ENCODE measurements at regions of chr11 and their contacts with region 1.

Region 1: DNA sequence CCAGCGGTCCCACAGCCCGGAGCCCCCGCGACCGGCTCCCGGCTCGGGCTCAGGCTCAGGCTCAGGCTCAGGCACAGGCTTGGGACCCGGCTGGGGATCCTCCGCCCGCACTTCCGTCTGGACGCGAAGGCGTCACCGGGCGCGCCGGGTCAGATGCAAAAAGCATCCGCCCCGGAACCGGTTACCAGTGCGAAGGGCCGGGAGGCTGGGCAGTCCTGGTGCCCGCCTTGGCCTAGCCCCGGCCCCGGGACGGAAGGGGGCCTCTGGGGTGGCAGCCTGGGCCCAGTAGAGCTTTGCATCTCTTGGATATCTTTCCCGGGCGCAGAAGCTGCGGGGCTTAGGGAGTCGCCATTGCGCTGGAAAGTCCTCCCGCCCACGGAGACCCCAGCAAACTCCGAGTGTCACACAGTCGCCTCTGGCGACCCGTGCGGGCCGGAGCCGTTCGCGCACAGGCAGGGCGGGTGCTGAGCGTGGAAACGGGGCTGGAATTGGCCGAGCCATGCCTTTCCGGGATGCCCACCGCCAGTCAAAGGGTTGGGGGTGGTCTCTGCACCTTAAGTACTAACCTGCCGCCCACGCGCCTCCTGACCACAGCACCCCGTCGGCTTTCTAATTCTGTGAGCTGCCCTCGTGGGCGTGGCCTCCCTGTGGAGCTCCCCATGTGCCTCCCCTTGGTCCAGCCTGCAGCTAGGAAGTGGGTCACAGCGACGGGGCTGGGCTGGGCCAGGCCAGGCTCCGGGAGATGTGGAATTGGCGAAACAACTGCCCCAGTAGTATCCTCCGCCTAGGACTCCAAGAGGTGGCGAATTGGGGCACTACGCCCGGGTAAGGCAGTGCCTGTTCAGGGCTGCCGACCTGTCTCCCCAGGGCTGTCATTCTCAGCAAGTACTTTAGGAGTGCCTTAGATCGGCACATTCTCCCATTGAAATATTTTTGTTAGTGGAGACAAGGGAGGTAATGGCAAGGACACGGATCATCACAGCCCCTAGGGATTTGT is at the start of gene TMEM9B:
- DNase-seq: peak; percentile 84 to 87 (median 84)
- H3K4me3 ChIP-seq: peak within 1 kb of the TSS; percentile 85 to 89 (median 85)
- H3K4me3 Mint-ChIP-seq: peak within 1 kb of the TSS; percentile 95 to 98
- H3K27ac ChIP-seq: peak within 1 kb of the TSS; percentile 98 to 99
- H3K27ac Mint-ChIP-seq: peak within 1 kb of the TSS; percentile 95 to 100 (median 97)
- H3K4me1 ChIP-seq: peaks cover 21 to 26% of the 10 kb centered on the region in 2 donors
- H3K4me1 Mint-ChIP-seq: peaks cover 35% of the 10 kb centered on the region
- H3K27me3 ChIP-seq: no peaks in the 10 kb centered on the region
- H3K27me3 Mint-ChIP-seq: peaks cover 0 to 5% (median 0%) of the 10 kb centered on the region in 3 donors
- CTCF ChIP-seq: no peak
- polyA plus RNA-seq, gene TMEM9B: 25.5 to 149 (median 141) TPM

Region 2: GRCh38 chr11:8671193-8671612 is 293.4 kb before region 1 on chr11:
- intact Hi-C with region 1: loop called in 1 of 2 experiments (anchors 10 kb)
- DNase-seq: no peak
- H3K4me3 ChIP-seq: no peak overlapping the region
- H3K4me3 Mint-ChIP-seq: no peak overlapping the region
- H3K27ac ChIP-seq: no peak overlapping the region
- H3K27ac Mint-ChIP-seq: no peak overlapping the region
- H3K4me1 ChIP-seq: no peaks in the 10 kb centered on the region
- H3K4me1 Mint-ChIP-seq: no peaks in the 10 kb centered on the region
- H3K27me3 ChIP-seq: no peaks in the 10 kb centered on the region
- H3K27me3 Mint-ChIP-seq: no peaks in the 10 kb centered on the region
- CTCF ChIP-seq: no peak

Region 3: DNA sequence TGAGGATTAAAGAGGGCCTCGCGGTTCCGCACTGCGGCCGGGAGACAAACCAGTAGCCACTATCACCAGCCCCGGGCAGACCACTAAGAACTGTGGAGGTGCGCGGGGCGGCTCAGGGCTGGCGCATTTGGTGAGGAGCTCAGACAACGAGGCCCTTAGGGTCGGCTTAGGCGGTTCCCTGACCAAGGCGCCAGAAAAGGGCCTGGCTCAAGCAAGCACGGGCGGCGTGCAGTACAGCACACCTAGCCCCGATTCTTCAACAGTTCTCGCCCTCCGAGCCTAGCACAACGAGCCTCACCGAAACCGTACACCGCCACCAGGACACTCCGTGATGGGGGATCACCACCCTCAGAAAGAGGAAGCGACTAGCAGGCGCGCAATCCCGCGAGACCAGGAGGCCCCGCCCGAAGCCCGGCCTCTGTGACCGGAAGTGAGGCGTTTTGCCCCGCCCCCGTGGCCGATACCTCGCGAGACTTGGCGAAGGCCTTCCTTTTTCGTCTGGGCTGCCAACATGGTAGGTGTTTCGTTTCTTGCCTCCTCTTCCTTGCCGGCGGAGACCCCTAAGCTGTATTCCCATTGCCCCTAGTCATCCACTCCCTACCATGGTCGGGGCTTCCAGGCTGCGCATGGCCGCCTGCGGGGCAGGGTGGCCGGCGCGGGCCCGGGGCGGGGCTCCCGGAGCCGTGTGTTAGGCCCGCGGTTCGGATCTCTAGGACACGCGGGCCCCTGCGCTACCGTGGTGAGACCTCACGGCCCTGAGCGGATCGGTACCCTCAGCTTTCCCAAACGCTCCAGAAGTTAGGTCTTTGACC is 282.1 kb before region 1 on chr11 and contains the starts of genes RPL27A and TRIM66:
- intact Hi-C with region 1: loop called (anchors 5 to 10 kb)
- DNase-seq: peak; percentile 97
- H3K4me3 ChIP-seq: peak within 1 kb of the TSS; percentile 70 to 96 (median 76)
- H3K4me3 Mint-ChIP-seq: peak within 1 kb of the TSS; percentile 90 to 92
- H3K27ac ChIP-seq: peak within 1 kb of the TSS; percentile 93 to 100
- H3K27ac Mint-ChIP-seq: peak within 1 kb of the TSS; percentile 94 to 99 (median 97)
- H3K4me1 ChIP-seq: peaks cover 21 to 29% of the 10 kb centered on the region in 2 donors
- H3K4me1 Mint-ChIP-seq: peaks cover 27% of the 10 kb centered on the region
- H3K27me3 ChIP-seq: no peaks in the 10 kb centered on the region
- H3K27me3 Mint-ChIP-seq: no peaks in the 10 kb centered on the region
- CTCF ChIP-seq: no peak
- polyA plus RNA-seq, gene RPL27A: 572 to 1,233 (median 1,091) TPM
- polyA plus RNA-seq, gene TRIM66: 0.04 to 12.0 (median 0.47) TPM

Region 4: GRCh38 chr11:9015677-9016076 is 51.1 kb after region 1 on chr11:
- intact Hi-C with region 1: loop called in 1 of 2 experiments (anchors 10 kb)
- DNase-seq: peak; percentile 67 to 82 (median 80)
- H3K4me3 ChIP-seq: no peak overlapping the region
- H3K4me3 Mint-ChIP-seq: no peak overlapping the region
- H3K27ac ChIP-seq: no peak overlapping the region
- H3K27ac Mint-ChIP-seq: peak overlapping the region in 1 of 7 donors; percentile 45
- H3K4me1 ChIP-seq: peaks cover 19 to 20% of the 10 kb centered on the region in 2 donors
- H3K4me1 Mint-ChIP-seq: peaks cover 23% of the 10 kb centered on the region
- H3K27me3 ChIP-seq: no peaks in the 10 kb centered on the region
- H3K27me3 Mint-ChIP-seq: peaks cover 3 to 6% (median 4%) of the 10 kb centered on the region in 3 donors
- CTCF ChIP-seq: peak; percentile 82

Measured in CD14-positive monocyte (primary cell).